ENCODE measurements at regions of chr13 and their contacts with region 1.

Region 1: GRCh38 chr13:23637829-23638228 is 67.6 kb downstream of the TNFRSF19 start:
- DNase-seq: no peak
- H3K4me3 ChIP-seq: peak overlapping the region in 6 of 59 donors; percentile 0 to 16 (median 11)
- H3K27ac ChIP-seq: peak overlapping the region in 42 of 59 donors; percentile 5 to 92 (median 60)
- H3K27me3 ChIP-seq: no peaks in the 10 kb centered on the region
- CTCF ChIP-seq: no peak

Region 2: DNA sequence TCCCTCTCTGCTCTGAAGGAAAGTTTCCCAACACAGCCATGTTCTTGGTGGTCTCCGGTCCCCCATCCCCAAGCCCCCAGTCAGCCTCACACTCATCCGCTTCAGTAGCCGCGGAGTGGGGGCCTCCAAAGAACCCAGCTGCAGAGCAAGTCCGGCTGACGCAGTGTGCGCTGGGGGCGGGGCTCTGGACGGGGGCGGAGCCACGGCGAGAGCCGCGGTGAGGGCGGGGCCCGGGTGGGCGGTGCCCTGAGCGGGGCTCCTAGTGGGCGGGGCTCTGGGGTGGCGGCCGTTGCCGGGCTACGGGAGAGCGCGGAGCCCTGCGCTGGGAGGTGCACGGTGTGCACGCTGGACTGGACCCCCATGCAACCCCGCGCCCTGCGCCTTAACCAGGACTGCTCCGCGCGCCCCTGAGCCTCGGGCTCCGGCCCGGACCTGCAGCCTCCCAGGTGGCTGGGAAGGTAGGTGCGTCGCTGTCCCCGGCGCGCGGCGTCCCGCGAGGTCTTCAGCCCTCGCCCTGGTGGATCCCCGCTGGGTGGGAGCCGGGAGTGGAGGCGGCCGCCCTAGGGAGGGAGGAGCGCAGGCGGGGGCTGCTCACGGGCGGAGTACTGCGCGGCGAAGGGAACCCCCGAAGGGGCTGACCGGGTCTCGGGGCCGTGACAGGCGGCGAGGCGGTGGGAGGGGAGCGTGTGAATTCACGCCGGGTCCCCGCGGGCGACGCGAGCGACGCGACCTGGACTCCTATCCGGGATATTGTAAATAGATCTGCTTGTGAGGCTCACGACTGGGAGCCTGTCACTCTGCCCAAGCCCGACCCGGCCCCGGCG is 58.5 kb before region 1 on chr13:
- intact Hi-C with region 1: loop called in 1 of 2 experiments (anchors 5 kb)
- DNase-seq: peak; percentile 55 to 92 (median 83)
- H3K4me3 ChIP-seq: peak overlapping the region; percentile 59 to 96 (median 84)
- H3K27ac ChIP-seq: peak overlapping the region in 45 of 59 donors; percentile 16 to 88 (median 66)
- H3K27me3 ChIP-seq: peaks cover 0 to 24% (median 3%) of the 10 kb centered on the region in 45 donors
- CTCF ChIP-seq: no peak